Calu3 (cell line): ENCODE measurements at regions of chr20 and their contacts with region 1.

Region 1: GRCh38 chr20:46568570-46569129 is 18.2 kb upstream of the OCSTAMP start:
- DNase-seq: peak; percentile 95
- H3K4me3 Mint-ChIP-seq: no peak overlapping the region
- H3K27ac Mint-ChIP-seq: no peak overlapping the region
- H3K4me1 Mint-ChIP-seq: peaks cover 26% of the 10 kb centered on the region
- H3K27me3 Mint-ChIP-seq: no peaks in the 10 kb centered on the region
- CTCF ChIP-seq: no peak

Region 2: DNA sequence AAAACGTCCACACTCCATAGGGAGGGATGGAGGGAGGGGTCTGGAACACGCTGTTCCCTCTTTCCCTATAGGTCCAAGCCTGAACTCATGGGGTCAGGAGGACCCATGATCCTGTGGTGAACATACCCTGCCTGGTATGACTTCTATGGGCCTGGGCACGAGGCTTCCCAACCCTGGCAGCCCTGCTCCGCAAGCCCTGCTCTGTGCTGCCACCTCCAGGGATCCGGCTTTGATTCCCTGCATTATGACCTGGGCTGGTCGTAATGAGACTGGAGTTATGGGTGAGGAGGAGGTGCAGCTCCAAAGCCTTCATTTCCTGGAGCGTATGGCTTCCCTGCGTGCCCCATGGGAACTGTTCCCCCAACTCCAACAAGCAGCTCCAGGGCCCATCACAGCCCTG is 315.3 kb before region 1 on chr20:
- CTCF ChIA-PET with region 1: no interaction called
- intact Hi-C with region 1: no loop called
- DNase-seq: peak; percentile 64
- H3K4me3 Mint-ChIP-seq: no peak overlapping the region
- H3K27ac Mint-ChIP-seq: no peak overlapping the region
- H3K4me1 Mint-ChIP-seq: peaks cover 9% of the 10 kb centered on the region
- H3K27me3 Mint-ChIP-seq: no peaks in the 10 kb centered on the region
- CTCF ChIP-seq: peak; percentile 20

Region 3: GRCh38 chr20:46423342-46423741 is 145.3 kb before region 1 on chr20:
- CTCF ChIA-PET with region 1: no interaction called
- intact Hi-C with region 1: no loop called
- DNase-seq: no peak
- H3K4me3 Mint-ChIP-seq: no peak overlapping the region
- H3K27ac Mint-ChIP-seq: no peak overlapping the region
- H3K4me1 Mint-ChIP-seq: peaks cover 8% of the 10 kb centered on the region
- H3K27me3 Mint-ChIP-seq: peaks cover 98% of the 10 kb centered on the region
- CTCF ChIP-seq: no peak

Region 4: DNA sequence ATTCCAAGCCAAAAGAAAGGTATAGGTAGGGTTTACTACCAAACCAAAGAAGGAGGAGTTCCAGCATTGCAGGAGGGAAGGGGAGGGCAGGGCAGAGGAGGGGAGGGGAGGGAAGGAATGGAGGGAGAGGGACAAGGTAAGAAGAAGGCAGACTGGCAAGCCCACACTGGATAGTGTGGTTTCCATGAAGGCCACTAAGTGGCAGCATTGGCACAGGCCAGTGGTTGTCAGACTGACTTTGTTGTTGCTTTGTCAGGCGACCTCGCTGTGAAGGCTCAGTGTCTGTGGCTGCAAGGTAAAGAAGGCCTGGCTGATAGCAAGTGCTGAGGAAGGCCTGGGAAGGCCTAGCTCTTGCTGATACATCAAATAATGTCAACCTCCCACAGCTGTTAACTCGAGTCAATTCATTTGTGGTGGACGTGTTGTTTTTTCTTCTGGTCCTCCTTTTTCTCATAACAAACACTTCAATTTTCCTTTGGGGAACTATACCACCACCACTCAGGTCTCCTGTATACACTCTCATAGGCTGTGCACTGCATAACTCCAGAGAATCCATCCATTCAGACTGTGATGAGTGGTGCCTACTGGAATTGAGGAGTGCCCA is 47.6 kb before region 1 on chr20:
- CTCF ChIA-PET with region 1: interaction called, 12 read pairs
- intact Hi-C with region 1: no loop called
- DNase-seq: peak; percentile 79
- H3K4me3 Mint-ChIP-seq: no peak overlapping the region
- H3K27ac Mint-ChIP-seq: no peak overlapping the region
- H3K4me1 Mint-ChIP-seq: no peaks in the 10 kb centered on the region
- H3K27me3 Mint-ChIP-seq: peaks cover 59% of the 10 kb centered on the region
- CTCF ChIP-seq: peak; percentile 86

Region 5: GRCh38 chr20:46539113-46539512 is 29.5 kb before region 1 on chr20:
- CTCF ChIA-PET with region 1: no interaction called
- intact Hi-C with region 1: no loop called
- DNase-seq: no peak
- H3K4me3 Mint-ChIP-seq: no peak overlapping the region
- H3K27ac Mint-ChIP-seq: no peak overlapping the region
- H3K4me1 Mint-ChIP-seq: no peaks in the 10 kb centered on the region
- H3K27me3 Mint-ChIP-seq: peaks cover 46% of the 10 kb centered on the region
- CTCF ChIP-seq: peak; percentile 26

Region 6: DNA sequence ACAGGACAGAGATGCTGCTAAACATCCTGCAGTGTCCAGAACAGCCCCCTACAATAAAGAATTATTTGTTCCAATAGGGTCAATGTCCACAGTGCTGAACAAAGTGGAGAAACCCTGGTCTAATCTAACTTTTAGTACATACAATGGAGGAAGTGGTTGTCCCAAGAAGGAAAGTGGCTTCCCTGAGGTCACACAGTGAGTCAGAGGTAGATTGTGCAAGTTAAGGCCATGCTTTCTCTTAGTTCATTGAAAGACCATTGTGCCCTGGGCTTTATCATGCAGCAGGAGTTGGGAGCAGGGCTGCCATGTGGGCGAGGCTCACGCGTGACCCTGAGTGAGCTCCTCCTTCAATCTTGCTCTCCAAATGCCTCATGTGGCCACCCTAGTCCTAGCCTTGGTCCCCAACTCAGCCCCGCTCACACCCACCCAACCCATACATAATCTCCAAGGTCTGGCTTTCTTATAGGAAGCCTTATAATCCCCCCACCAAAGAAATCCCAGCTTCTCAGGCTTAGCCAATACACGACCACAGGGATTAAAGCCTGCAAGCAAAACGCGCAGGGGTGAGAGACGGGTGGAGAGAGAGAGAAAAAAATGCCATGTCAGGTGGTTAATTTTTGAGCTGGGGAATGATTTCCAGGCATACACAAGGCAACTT is 62.7 kb after region 1 on chr20:
- CTCF ChIA-PET with region 1: interaction called, 5 read pairs
- intact Hi-C with region 1: loop called (anchors 5 kb)
- DNase-seq: peak; percentile 88
- H3K4me3 Mint-ChIP-seq: peak overlapping the region; percentile 22
- H3K27ac Mint-ChIP-seq: peak overlapping the region; percentile 94
- H3K4me1 Mint-ChIP-seq: peaks cover 59% of the 10 kb centered on the region
- H3K27me3 Mint-ChIP-seq: peaks cover 6% of the 10 kb centered on the region
- CTCF ChIP-seq: no peak